ENCODE measurements at regions of chr10 and their contacts with region 1.

Region 1: DNA sequence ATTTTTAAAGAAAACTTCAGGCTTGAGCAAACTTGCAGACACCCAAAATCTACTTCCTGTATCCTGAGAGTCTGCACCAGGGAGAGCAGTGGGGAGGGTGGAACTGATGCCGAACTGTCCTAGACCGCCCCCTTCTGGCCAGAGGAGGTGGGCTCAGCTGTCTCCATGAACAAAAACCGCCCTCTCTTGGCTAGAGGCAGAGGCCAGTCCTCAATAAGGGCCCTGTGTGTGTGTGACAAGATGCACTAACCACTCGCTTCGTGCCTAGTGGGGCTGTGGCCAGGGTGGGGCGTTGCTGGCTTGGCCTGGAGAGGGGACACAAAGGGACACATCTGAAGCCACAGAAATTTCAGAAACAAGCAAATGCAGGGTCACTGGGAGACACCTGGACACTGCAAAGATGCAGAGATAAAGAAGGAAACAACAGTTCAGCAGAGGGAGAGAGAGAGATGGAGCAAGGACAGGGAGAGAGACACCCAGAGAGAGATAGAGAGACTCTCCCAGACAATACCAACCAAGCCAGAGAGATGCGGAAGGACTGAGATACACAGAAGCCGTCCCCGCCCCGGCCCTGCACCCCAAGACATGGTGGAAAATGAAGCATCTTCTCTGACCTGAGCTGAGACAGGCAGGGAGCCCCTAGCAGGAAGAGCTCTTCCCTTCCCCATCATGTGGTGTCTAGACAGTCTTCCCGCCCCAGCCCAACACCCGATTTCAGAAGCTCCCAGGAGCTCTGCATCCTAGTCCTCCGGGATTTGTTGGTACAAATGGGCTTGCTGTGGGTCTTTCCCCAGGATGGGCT is 22.7 kb upstream of the FXYD4 start:
- DNase-seq: peak; percentile 93
- H3K4me3 Mint-ChIP-seq: no peak overlapping the region
- H3K27ac Mint-ChIP-seq: peak overlapping the region; percentile 81
- H3K4me1 Mint-ChIP-seq: peaks cover 57% of the 10 kb centered on the region
- H3K27me3 Mint-ChIP-seq: peaks cover 47% of the 10 kb centered on the region

Region 2: GRCh38 chr10:43204943-43205671 is 143.6 kb before region 1 on chr10:
- CTCF ChIA-PET with region 1: interaction called, 38 read pairs
- DNase-seq: peak; percentile 74
- H3K4me3 Mint-ChIP-seq: no peak overlapping the region
- H3K27ac Mint-ChIP-seq: no peak overlapping the region
- H3K4me1 Mint-ChIP-seq: peaks cover 12% of the 10 kb centered on the region
- H3K27me3 Mint-ChIP-seq: peaks cover 10% of the 10 kb centered on the region

Region 3: GRCh38 chr10:43265799-43266721 is 82.7 kb before region 1 on chr10:
- CTCF ChIA-PET with region 1: interaction called, 11 read pairs
- DNase-seq: peak; percentile 71
- H3K4me3 Mint-ChIP-seq: peak overlapping the region; percentile 76
- H3K27ac Mint-ChIP-seq: no peak overlapping the region
- H3K4me1 Mint-ChIP-seq: peaks cover 9% of the 10 kb centered on the region
- H3K27me3 Mint-ChIP-seq: peaks cover 87% of the 10 kb centered on the region

Region 4: DNA sequence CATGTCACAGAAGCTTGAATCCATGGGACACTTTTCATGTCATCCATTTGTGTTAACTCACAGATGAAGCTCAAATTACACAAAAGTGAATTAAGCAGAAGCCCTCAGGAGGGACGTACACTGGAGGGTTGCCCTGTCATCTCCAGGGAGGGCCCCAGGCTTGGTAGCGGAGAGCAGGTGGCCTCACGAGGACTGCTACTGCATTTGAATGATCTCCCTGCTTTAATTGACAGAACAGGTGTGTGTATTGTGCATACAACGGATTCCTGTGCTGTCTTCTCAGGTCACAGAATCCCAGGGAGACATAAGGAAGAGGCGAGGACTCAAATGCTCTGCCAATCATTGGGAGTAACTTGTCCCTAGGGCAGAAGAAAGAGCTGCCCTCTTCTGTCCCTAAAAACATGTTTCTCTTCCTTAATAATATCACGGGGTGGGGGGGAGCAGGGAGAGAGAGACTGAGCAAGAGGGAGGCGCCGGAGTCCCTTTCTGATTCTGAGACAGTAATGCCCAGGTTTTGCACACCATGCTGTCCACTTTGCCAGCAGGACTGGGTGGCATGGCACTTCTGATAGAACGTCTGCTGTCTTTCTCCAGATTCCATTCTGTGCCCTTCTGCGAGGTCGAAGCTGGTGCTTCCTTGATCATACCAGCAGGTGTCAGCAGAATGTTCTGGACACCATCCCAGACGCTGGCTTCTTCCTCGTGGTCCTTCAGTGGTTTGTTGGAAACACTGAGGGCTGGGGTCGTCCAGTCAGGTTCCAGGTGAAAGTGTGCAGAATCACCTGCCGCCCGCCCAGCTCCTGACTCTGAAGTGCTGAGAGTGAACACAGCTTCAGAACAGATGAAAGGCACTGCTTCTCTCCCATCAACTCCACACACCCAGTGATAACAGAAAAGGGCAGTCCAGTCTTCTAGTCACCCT is 55.7 kb before region 1 on chr10:
- CTCF ChIA-PET with region 1: interaction called, 121 read pairs
- DNase-seq: peak; percentile 65
- H3K4me3 Mint-ChIP-seq: no peak overlapping the region
- H3K27ac Mint-ChIP-seq: peak overlapping the region; percentile 88
- H3K4me1 Mint-ChIP-seq: peaks cover 81% of the 10 kb centered on the region
- H3K27me3 Mint-ChIP-seq: peaks cover 21% of the 10 kb centered on the region

Region 5: DNA sequence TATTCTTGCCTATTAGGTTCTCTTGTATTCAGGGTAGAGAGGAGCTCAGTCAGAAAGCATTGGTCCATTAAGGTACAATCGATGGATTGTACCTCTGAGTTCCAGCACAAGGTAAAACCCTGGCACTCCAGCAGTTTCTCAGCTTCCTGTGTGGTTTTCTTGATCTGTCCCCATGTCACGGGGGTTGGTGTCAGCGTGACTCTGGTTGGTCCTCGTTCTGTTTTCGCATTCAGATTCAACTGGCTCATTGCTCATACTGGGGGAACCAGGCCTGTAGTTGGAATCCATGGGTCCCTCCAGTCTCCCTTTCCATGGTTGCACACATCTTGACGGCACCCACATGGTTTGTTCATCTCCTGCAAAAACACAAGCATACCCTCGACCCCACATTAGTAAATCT is 49.1 kb before region 1 on chr10:
- CTCF ChIA-PET with region 1: interaction called, 121 read pairs
- DNase-seq: peak; percentile 73
- H3K4me3 Mint-ChIP-seq: peak overlapping the region; percentile 20
- H3K27ac Mint-ChIP-seq: peak overlapping the region; percentile 95
- H3K4me1 Mint-ChIP-seq: peaks cover 82% of the 10 kb centered on the region
- H3K27me3 Mint-ChIP-seq: peaks cover 7% of the 10 kb centered on the region

Region 6: GRCh38 chr10:43396928-43397624 is 48.4 kb after region 1 on chr10:
- CTCF ChIA-PET with region 1: no interaction called
- DNase-seq: peak; percentile 90
- H3K4me3 Mint-ChIP-seq: peak overlapping the region; percentile 84
- H3K27ac Mint-ChIP-seq: peak overlapping the region; percentile 91
- H3K4me1 Mint-ChIP-seq: peaks cover 78% of the 10 kb centered on the region
- H3K27me3 Mint-ChIP-seq: no peaks in the 10 kb centered on the region

Region 7: DNA sequence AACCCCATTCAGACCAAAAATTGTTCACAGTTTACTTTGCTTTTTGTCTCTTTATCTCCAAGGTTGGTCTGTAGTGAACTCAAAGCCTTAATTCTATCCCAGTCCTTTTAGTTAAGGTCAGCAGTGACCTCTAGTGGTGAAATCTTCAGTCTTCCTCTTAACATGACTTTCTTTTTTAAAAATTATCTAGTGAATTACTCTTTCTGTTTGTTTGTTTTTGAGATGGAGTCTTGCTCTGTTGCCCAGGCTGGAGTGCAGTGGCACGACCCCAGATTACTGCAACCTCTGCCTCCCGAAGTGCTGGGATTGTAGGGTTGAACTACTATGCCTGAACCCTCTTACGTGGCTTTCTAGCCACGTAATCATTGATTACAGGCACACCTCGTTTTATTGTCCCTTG is 113.2 kb after region 1 on chr10:
- CTCF ChIA-PET with region 1: interaction called, 12 read pairs
- DNase-seq: peak; percentile 33
- H3K4me3 Mint-ChIP-seq: no peak overlapping the region
- H3K27ac Mint-ChIP-seq: no peak overlapping the region
- H3K4me1 Mint-ChIP-seq: peaks cover 18% of the 10 kb centered on the region
- H3K27me3 Mint-ChIP-seq: no peaks in the 10 kb centered on the region